ENCODE measurements at regions of chr2 and their contacts with region 1.

Region 1: DNA sequence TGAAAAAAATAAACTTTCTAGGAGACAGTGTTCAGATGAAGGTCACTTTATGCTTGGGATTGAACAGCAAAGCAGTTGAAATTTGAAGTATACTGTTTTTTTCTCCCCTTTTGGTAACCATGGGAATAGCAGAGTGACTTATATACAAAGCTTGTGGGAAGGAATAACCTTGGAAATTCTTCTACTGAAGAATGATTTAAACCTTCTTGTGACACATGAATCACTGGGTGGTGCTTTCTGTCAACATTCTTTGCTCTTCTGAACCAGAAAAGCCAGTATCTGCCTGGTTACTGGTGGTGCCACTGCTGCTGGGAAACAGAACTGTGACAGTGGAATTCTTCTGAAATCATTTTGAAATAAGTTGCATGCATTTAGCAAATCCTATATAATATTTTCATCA is 39.4 kb upstream of the RND3 start:
- DNase-seq: peak; percentile 77 to 79
- H3K4me3 ChIP-seq: no peak overlapping the region
- H3K4me3 Mint-ChIP-seq: peak overlapping the region; percentile 28
- H3K27ac Mint-ChIP-seq: peak overlapping the region; percentile 86
- H3K4me1 ChIP-seq: peaks cover 49% of the 10 kb centered on the region
- H3K4me1 Mint-ChIP-seq: peaks cover 28% of the 10 kb centered on the region
- H3K27me3 ChIP-seq: no peaks in the 10 kb centered on the region
- H3K27me3 Mint-ChIP-seq: no peaks in the 10 kb centered on the region
- CTCF ChIP-seq: no peak

Region 2: DNA sequence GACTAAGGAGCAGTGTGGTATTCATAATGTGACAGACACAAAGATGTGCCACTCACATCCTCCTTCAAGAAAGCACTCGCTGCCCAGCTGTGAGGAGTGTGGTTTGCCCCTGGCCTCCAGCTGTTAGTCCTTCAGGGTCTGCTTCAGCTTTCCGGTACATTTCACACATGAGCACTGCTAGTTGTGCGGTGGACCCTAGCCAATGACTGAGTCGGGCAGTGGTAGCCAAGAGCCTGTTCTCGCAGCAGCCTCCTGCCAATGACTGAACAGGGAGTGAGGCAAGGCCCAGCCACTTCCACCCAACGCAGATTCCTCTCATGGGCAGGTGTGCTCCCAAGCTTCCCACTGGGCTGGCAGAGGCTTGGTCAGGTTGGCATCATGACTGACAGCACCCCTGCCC is 480.5 kb after region 1 on chr2:
- CTCF ChIA-PET with region 1: no interaction called
- POLR2A ChIA-PET with region 1: no interaction called
- intact Hi-C with region 1: loop called (anchors 1 kb)
- DNase-seq: no peak
- H3K4me3 ChIP-seq: no peak overlapping the region
- H3K4me3 Mint-ChIP-seq: no peak overlapping the region
- H3K27ac Mint-ChIP-seq: no peak overlapping the region
- H3K4me1 ChIP-seq: no peaks in the 10 kb centered on the region
- H3K4me1 Mint-ChIP-seq: no peaks in the 10 kb centered on the region
- H3K27me3 ChIP-seq: no peaks in the 10 kb centered on the region
- H3K27me3 Mint-ChIP-seq: peaks cover 2% of the 10 kb centered on the region
- CTCF ChIP-seq: no peak